Gastrocnemius medialis (tissue), 4 donors: ENCODE measurements at regions of chr4 and their contacts with region 1.

Region 1: GRCh38 chr4:137819964-137820383 is 287.7 kb upstream of the PCDH18 start:
- DNase-seq: no peak
- ATAC-seq: peak in 1 of 2 donors; percentile 46
- H3K4me3 ChIP-seq: no peak overlapping the region
- H3K27ac ChIP-seq: no peak overlapping the region
- H3K4me1 ChIP-seq: peaks cover 0 to 4% of the 10 kb centered on the region in 2 donors
- H3K27me3 ChIP-seq: no peaks in the 10 kb centered on the region
- CTCF ChIP-seq: peak in 3 of 5 experiments; percentile 14 to 42 (median 20)
- POLR2A ChIP-seq: no peak

Region 2: DNA sequence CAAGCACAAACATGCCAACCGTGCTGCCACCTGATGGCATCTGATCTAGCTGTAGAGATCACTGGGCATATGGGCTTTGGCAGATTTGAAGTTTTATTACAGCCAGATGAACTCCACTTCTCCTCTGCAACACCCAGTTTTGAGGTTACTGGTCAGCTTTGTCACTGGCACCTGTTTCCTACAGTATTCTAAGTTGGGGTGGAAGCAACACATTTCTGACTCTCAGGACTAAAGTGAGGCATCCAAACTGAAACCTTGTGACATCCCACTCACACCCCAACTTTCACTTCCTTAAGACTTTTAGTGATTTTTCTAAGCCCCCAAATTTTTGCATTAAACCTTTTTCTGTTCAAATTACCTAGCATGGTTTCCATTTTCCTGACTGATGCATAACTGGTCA is 172.6 kb before region 1 on chr4:
- in situ Hi-C with region 1: no loop called
- intact Hi-C with region 1: no loop called
- DNase-seq: no peak
- ATAC-seq: no peak
- H3K4me3 ChIP-seq: no peak overlapping the region
- H3K27ac ChIP-seq: no peak overlapping the region
- H3K4me1 ChIP-seq: no peaks in the 10 kb centered on the region
- H3K27me3 ChIP-seq: no peaks in the 10 kb centered on the region
- CTCF ChIP-seq: no peak
- POLR2A ChIP-seq: no peak

Region 3: DNA sequence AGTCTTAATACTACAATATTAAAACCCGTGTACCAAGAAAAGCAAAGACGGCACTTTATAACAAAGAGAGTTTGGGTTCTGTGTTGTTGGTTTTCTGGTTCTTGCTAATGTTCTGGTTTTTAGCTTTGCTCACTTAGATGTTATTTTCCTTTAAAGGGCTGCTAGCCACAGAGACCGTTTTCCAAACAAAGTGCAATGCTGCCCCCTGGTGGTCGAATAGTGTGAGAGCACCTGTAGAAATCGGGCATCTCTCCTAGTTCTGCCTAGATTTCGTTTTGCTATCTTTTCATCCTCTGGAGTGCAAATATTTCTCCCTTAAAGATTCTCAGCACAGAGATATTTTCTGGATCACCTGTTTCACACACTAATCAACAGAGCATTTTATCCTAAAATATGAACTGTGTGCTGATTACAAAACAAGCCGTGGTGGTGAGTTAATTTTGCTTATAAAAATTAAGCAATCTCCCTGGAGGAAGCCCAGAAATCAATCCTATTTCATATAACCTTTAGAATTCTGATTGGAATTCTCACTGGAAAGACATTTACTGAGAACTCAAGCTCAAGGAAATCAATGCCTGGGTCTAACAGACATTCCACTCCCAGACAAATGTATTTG is 861.1 kb after region 1 on chr4:
- in situ Hi-C with region 1: loop called in 1 of 4 experiments (anchors 25 kb)
- intact Hi-C with region 1: loop called (anchors 5 kb)
- DNase-seq: peak; percentile 50 to 53
- ATAC-seq: peak; percentile 67 to 70
- H3K4me3 ChIP-seq: no peak overlapping the region
- H3K27ac ChIP-seq: no peak overlapping the region
- H3K4me1 ChIP-seq: peaks cover 3 to 20% of the 10 kb centered on the region in 2 donors
- H3K27me3 ChIP-seq: no peaks in the 10 kb centered on the region
- CTCF ChIP-seq: peak; percentile 76 to 93 (median 84)
- POLR2A ChIP-seq: no peak

Region 4: DNA sequence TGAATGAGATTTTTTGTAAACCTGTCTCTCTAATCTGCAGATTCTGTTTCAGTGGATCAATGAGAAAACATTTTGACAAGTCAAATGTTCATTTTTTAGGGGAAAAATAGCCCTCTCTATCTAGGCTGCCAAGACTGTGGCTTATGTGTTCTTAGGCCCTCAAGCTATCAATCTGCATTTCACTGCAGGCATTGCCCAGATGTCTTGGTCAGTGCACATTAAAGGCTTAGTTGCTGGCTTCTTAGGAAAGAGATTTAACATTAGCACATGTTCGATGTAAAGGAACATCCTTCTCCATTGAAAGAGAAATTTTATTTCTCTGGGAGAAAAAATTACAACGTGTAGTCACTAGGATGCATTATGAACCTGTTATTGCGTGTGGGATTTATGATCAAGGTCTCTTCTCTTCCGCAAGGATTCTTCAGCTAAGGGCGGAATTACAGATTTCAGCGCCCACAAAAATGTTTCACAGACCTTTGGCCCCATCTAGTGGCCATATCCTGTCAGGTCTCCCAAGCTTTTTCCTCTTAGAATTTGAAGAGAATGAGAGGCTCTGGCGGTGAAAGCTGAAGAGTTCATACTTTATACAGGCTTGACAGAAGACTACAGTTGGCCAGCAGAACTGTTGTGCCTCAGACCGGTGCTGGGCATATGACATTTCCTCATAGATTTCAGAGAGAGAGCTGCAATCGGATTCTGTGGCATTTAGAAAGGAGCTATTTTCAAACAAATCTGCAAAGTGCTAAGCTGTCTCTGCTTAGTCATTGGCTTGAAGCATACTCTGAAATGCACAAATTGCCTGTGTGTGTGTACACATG is 1051.0 kb after region 1 on chr4:
- in situ Hi-C with region 1: loop called in 1 of 4 experiments (anchors 25 kb)
- intact Hi-C with region 1: no loop called
- DNase-seq: peak; percentile 11 to 36
- ATAC-seq: peak; percentile 74 to 84
- H3K4me3 ChIP-seq: no peak overlapping the region
- H3K27ac ChIP-seq: no peak overlapping the region
- H3K4me1 ChIP-seq: peaks cover 3 to 6% of the 10 kb centered on the region in 2 donors
- H3K27me3 ChIP-seq: no peaks in the 10 kb centered on the region
- CTCF ChIP-seq: peak; percentile 74 to 87 (median 83)
- POLR2A ChIP-seq: no peak